Right ventricle myocardium superior (tissue), 1 donor: ENCODE measurements at regions of chr18 and their contacts with region 1.

Region 1: DNA sequence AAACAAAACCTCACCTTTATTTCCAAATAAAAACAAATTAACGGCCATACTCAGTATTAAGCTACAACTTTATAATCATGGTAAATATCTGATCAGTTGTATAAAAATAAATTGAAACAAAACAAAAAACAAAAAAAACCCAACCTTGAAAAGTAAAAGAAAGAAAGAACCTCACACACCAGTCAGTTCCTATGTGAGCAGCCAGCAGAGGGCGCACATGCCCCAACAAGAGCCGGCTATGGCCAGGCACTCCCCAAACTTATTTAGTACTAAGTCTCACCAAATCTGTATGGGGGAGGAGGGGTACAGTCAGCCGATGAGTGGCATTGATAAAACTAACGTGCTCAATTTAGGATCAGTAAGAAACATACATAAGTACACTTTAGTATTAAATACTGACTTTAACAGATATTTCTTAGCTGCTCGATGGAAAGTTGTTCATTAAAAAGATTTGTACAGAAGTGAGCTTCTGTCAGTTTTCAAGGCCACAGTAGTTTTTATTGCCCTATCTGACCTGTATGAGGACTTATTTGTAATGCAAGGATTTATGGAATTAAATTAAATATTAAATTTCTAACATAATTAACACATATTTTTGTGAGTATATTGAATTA is 172.6 kb downstream of the TCF4 start:
- DNase-seq: peak; percentile 93
- ATAC-seq: peak; percentile 93

Region 2: GRCh38 chr18:55781481-55781957 is 366.2 kb after region 1 on chr18:
- intact Hi-C with region 1: loop called (anchors 5 kb)
- DNase-seq: peak; percentile 50
- ATAC-seq: peak; percentile 62